Activated CD4-positive, alpha-beta memory T cell treated with anti-CD3 and anti-CD28 coated beads for 36 hours (primary cell): ENCODE measurements at regions of chr19 and their contacts with region 1.

Region 1: DNA sequence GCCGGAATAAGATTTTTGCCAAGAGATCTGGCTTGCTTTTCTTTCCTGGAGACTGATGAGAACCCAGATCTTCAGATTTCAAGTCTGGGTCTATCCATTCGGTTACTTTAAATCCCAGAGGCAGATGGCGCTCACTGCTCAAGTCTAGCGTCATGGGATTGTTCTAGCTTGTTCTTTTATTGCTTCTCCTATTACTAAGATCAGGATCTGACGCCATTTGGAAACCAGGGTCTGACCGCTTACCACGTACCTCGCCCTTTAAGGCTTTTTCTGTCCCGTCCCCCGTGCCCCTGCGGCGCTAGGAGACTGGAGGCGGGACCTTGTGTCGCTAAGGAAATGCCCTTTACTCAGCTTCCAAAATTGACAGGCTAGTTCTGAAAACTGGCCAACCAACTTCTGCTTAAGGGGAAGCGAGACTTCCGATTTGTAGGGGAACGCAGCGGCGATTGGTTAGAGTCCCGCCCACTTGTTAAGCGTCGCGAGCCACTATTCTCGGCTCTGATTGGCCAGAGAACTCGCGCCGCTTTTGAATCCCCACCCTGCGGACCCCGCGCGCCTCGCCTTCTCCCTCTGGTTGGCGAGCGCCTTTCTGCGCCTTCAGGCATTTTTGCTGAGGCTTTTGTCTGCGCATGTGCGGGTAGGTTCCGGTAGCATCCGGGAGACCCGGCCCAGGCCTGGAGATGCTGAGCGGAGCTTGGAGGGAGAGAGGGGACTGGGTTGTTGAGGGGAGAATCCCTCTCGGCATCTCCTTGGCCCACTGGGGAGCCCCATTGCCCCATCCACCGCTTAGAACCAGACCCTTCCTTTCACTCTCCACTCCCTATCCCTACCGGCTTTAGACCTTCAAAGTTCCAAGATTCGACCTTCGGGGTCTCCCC is 3.8 kb upstream of the C19orf84 start:
- DNase-seq: peak; percentile 98
- H3K4me3 Mint-ChIP-seq: peak overlapping the region; percentile 84
- H3K27ac Mint-ChIP-seq: peak overlapping the region; percentile 92
- H3K4me1 Mint-ChIP-seq: peaks cover 29% of the 10 kb centered on the region
- H3K27me3 Mint-ChIP-seq: peaks cover 2% of the 10 kb centered on the region

Region 2: DNA sequence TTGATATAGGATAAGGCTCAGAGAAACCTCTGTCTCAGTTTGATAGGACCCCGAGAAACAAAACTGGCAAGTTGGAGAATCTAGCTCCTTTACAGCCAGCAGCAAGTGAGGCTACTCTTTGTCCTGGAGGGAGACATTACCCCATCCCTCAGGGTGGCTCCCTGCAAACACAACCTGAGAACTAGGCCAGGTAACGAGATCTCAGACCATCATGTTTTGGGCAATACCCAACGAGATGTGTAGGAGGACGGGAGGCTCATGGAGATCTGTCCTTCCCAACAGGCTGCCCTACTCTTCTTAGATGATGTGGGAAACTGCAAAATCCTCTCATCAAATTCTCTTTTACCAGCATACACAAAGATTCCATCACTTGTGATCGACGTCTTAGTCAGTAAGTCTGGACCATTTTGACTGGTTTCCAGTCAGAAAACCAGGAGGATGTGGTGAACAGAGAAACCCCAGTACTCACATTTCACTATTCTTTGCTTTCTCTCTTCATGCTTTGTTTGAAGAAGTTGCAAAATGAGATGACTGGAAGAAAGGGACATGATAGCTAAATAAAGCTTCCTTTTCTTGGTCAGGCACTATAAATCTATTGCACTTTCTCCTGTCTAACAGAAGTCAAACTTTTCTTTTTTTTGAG is 280.0 kb before region 1 on chr19:
- CTCF ChIA-PET with region 1: no interaction called
- POLR2A ChIA-PET with region 1: no interaction called
- intact Hi-C with region 1: loop called (anchors 1 kb)
- DNase-seq: no peak
- H3K4me3 Mint-ChIP-seq: no peak overlapping the region
- H3K27ac Mint-ChIP-seq: peak overlapping the region; percentile 90
- H3K4me1 Mint-ChIP-seq: peaks cover 24% of the 10 kb centered on the region
- H3K27me3 Mint-ChIP-seq: peaks cover 3% of the 10 kb centered on the region

Region 3: GRCh38 chr19:51367565-51368365 is 26.4 kb before region 1 on chr19:
- CTCF ChIA-PET with region 1: interaction called, 12 read pairs
- POLR2A ChIA-PET with region 1: interaction called, 27 read pairs
- intact Hi-C with region 1: loop called (anchors 1 kb)
- DNase-seq: peak; percentile 100
- H3K4me3 Mint-ChIP-seq: peak overlapping the region; percentile 99
- H3K27ac Mint-ChIP-seq: peak overlapping the region; percentile 96
- H3K4me1 Mint-ChIP-seq: peaks cover 57% of the 10 kb centered on the region
- H3K27me3 Mint-ChIP-seq: no peaks in the 10 kb centered on the region

Region 4: GRCh38 chr19:51407511-51408131 is 13.4 kb after region 1 on chr19:
- CTCF ChIA-PET with region 1: interaction called, 12 read pairs
- POLR2A ChIA-PET with region 1: interaction called, 4 read pairs
- intact Hi-C with region 1: no loop called
- DNase-seq: peak; percentile 56
- H3K4me3 Mint-ChIP-seq: no peak overlapping the region
- H3K27ac Mint-ChIP-seq: no peak overlapping the region
- H3K4me1 Mint-ChIP-seq: peaks cover 7% of the 10 kb centered on the region
- H3K27me3 Mint-ChIP-seq: peaks cover 5% of the 10 kb centered on the region

Region 5: DNA sequence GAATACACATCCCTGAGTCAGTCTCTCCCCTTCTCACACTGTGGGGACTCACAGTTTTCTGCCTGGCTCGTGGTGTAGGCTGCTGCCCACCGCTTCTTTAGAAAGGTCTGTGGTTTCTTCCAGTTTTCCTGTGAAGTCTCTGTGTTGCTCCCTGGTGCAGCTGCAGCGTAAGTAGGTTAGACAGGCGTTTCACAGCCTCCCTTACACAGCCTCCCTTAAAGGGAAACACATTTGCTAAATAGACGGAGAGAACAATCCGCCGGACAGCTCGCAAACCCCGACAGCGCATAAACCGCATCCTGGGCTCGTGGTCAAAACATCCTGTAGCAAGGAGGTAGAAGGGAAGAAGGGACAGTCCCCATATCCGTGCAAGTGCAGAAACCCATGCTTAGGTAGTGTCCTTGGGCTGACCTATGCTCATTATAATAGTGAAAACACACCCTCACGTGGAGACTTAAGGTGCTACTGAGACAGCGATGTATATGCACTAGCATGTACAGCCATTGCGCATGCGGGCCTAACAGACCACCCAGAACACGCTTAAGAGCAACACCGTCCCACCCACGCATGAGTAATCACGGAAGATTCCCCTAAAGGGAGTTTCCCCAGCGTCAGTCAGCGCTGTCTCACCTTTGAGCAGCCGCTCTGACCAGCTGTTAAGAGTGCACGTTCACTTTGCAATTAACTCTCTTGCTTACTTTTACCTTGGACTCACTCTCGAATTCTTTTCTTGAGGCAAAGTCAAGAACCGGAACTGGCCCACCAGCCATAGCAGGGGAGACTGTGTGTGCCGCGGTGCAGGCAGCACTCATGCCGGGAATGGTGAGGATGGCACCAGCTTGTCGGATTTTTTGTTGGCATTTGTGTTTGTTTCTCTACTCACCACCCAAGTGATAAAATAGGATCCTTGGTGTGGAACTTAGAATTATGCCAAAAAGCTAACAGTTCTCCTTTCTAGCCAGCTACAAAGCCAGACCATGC is 47.5 kb after region 1 on chr19:
- CTCF ChIA-PET with region 1: interaction called, 54 read pairs
- POLR2A ChIA-PET with region 1: interaction called, 9 read pairs
- intact Hi-C with region 1: loop called (anchors 1 kb)
- DNase-seq: peak; percentile 97
- H3K4me3 Mint-ChIP-seq: peak overlapping the region; percentile 81
- H3K27ac Mint-ChIP-seq: peak overlapping the region; percentile 97
- H3K4me1 Mint-ChIP-seq: peaks cover 60% of the 10 kb centered on the region
- H3K27me3 Mint-ChIP-seq: peaks cover 2% of the 10 kb centered on the region

Region 6: DNA sequence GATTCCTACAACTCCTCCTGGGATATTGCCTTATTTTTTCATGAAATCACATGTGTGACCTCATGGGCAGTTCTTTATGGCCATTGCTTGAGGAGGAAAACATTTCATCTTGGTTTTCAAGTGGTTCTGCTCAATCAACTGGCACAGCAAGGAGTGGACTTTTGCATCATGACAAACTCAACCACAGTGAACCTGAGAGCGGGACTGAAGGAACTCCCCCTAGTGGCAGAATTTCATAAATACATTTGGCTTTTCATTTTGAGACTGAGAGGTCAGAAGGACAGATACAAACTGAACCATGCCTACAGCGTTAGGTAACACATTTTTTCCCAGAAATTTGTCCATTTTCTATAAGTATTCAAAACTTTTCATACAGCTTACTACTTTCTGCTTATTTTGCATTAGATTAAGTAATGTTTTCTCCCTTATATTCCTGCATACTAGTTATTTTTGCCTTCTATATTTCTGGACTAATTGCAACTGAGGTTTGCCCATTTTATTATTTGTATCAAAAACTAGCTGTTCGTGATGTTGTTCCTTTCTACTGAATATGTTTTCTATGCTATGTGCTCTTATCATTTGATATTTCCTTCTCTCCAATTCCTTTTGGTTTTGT is 120.8 kb after region 1 on chr19:
- CTCF ChIA-PET with region 1: interaction called, 15 read pairs
- POLR2A ChIA-PET with region 1: no interaction called
- intact Hi-C with region 1: no loop called
- DNase-seq: peak; percentile 28
- H3K4me3 Mint-ChIP-seq: no peak overlapping the region
- H3K27ac Mint-ChIP-seq: no peak overlapping the region
- H3K4me1 Mint-ChIP-seq: peaks cover 12% of the 10 kb centered on the region
- H3K27me3 Mint-ChIP-seq: peaks cover 25% of the 10 kb centered on the region

Region 7: DNA sequence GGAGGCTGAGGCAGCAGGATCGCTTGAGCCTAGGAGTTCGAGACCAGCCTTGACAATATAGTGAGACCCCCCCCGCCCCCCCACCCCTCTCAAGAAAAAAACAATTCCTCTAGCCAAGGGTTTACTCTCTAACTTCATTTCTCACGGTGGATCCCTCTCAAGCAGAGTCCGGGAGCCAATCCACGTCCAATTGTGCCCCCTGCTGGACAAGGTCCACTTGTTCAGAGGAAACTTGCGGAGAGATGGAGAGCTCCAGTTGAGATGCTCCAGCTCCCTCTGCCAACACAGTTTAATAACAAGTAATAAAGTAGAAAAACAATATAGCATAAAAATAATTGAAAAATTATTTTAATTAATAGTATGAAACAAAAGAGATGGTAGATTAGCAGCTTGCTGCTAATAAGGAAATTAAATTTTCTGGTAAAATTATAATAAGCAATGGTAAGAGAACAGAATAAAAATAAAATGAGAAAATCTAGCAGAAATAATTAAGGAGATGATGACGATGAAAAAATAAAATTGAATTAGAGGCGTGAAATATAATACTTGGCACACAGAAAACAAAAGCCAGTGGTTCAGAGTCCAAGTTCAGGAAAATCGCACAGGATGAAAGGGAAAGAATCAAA is 266.9 kb after region 1 on chr19:
- CTCF ChIA-PET with region 1: interaction called, 12 read pairs
- POLR2A ChIA-PET with region 1: no interaction called
- intact Hi-C with region 1: no loop called
- DNase-seq: peak; percentile 80
- H3K4me3 Mint-ChIP-seq: no peak overlapping the region
- H3K27ac Mint-ChIP-seq: no peak overlapping the region
- H3K4me1 Mint-ChIP-seq: peaks cover 5% of the 10 kb centered on the region
- H3K27me3 Mint-ChIP-seq: peaks cover 15% of the 10 kb centered on the region